ENCODE measurements at regions of chr11 and their contacts with region 1.

Region 1: GRCh38 chr11:102495161-102496042 is 35.1 kb downstream of the MMP7 start:
- DNase-seq: peak; percentile 70
- H3K4me3 ChIP-seq: no peak overlapping the region
- H3K27ac ChIP-seq: no peak overlapping the region
- H3K4me1 ChIP-seq: peaks cover 17% of the 10 kb centered on the region
- H3K27me3 ChIP-seq: no peaks in the 10 kb centered on the region
- CTCF ChIP-seq: peak; percentile 54 to 55

Region 2: DNA sequence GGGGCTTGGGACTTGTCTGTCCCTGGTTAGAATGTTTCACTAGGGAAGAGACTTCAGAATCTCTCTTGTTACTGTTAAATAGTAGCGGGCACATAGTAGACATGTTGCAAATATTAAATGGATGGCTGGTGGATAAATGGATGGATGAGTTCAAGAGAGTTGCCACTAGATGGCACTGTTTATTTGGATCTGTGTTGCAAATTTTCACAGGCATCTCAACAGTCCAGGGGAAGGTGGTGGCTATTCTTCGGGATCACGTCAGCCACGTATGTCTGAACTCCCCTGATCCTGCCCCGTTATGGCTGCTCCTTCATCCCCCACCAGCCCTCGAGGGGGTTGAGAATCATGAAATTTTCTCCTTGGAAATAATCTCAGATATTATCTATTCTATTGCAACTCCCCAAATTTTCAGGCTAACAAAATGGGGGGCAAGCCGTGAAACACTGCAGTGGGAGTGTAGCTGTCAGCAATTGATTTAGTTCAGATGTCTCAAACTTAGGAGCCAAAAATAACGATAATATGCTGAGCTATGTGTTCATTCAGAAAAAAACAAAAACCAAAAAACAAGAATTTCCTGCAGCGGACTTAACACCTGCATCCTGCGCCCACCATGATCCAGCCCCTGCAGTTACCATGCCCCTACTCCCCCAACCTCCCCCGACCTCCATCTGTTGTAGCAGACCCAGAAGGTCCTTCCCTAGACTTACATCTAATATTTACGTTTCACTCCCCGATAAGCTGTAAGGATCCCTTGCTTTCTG is 207.3 kb before region 1 on chr11:
- CTCF ChIA-PET with region 1: no interaction called
- dilution Hi-C with region 1: no loop called
- in situ Hi-C with region 1: loop called (anchors 5 to 10 kb)
- intact Hi-C with region 1: loop called (anchors 1 kb)
- DNase-seq: peak; percentile 70
- H3K4me3 ChIP-seq: no peak overlapping the region
- H3K27ac ChIP-seq: peak overlapping the region; percentile 15
- H3K4me1 ChIP-seq: peaks cover 10% of the 10 kb centered on the region
- H3K27me3 ChIP-seq: no peaks in the 10 kb centered on the region
- CTCF ChIP-seq: peak; percentile 46 to 71

Region 3: GRCh38 chr11:102346748-102347461 is 148.5 kb before region 1 on chr11 and contains the start of gene BIRC2:
- CTCF ChIA-PET with region 1: interaction called, 4 read pairs
- dilution Hi-C with region 1: loop called (anchors 5 kb)
- in situ Hi-C with region 1: no loop called
- intact Hi-C with region 1: loop called (anchors 1 kb)
- DNase-seq: peak; percentile 94
- H3K4me3 ChIP-seq: peak within 1 kb of the TSS; percentile 65 to 81 (median 80)
- H3K27ac ChIP-seq: peak within 1 kb of the TSS; percentile 88
- H3K4me1 ChIP-seq: peaks cover 23% of the 10 kb centered on the region
- H3K27me3 ChIP-seq: no peaks in the 10 kb centered on the region
- CTCF ChIP-seq: peak; percentile 52 to 83
- total RNA-seq, gene BIRC2: 59.4 to 78.2 TPM

Region 4: DNA sequence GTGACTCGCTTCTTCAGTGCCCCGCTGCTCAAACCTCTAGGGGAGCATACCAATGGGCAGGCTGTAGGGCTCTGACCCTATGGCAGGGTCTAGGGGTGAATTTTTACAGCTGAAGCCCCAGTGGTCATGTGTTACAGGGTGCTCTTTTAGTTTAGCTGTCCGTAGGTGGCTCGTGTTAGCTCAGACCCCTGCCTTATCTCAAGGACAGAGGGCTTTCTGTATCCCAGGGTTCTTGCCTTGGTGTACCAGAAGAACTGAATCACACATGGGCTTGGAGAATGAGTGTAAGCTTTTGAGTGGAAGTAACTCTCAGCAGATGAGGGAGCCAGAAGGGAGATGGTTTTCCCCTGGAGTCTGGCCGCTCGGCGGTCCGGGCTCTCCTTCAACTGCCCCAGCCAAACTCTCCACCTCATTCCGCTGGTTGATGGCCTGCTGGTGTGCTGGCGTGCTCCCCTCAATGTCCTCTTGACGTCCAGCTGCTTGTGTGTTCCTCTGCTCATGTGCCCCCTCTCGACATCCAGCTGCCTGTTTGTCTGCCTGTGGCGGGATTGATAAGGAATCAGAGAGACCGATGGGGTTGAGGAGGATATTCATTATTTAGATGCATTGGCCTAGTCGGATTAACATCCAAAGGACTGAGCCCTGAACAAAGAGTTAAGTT is 110.9 kb before region 1 on chr11:
- CTCF ChIA-PET with region 1: no interaction called
- dilution Hi-C with region 1: no loop called
- in situ Hi-C with region 1: loop called (anchors 5 to 25 kb)
- intact Hi-C with region 1: no loop called
- DNase-seq: no peak
- H3K4me3 ChIP-seq: no peak overlapping the region
- H3K27ac ChIP-seq: no peak overlapping the region
- H3K4me1 ChIP-seq: no peaks in the 10 kb centered on the region
- H3K27me3 ChIP-seq: no peaks in the 10 kb centered on the region
- CTCF ChIP-seq: no peak

Region 5: GRCh38 chr11:102451681-102452460 is 43.5 kb before region 1 on chr11:
- CTCF ChIA-PET with region 1: no interaction called
- dilution Hi-C with region 1: no loop called
- in situ Hi-C with region 1: no loop called
- intact Hi-C with region 1: loop called (anchors 1 kb)
- DNase-seq: peak; percentile 58
- H3K4me3 ChIP-seq: peak overlapping the region; percentile 86 to 92 (median 88)
- H3K27ac ChIP-seq: peak overlapping the region; percentile 75
- H3K4me1 ChIP-seq: peaks cover 44% of the 10 kb centered on the region
- H3K27me3 ChIP-seq: no peaks in the 10 kb centered on the region
- CTCF ChIP-seq: peak; percentile 3 to 25

Region 6: GRCh38 chr11:102666331-102666957 is 171.0 kb after region 1 on chr11:
- CTCF ChIA-PET with region 1: no interaction called
- dilution Hi-C with region 1: no loop called
- in situ Hi-C with region 1: no loop called
- intact Hi-C with region 1: loop called (anchors 2 kb)
- DNase-seq: peak; percentile 37
- H3K4me3 ChIP-seq: no peak overlapping the region
- H3K27ac ChIP-seq: no peak overlapping the region
- H3K4me1 ChIP-seq: no peaks in the 10 kb centered on the region
- H3K27me3 ChIP-seq: no peaks in the 10 kb centered on the region
- CTCF ChIP-seq: peak; percentile 89 to 92